Posterior vena cava (tissue), 2 donors: ENCODE measurements at regions of chr7 and their contacts with region 1.

Region 1: DNA sequence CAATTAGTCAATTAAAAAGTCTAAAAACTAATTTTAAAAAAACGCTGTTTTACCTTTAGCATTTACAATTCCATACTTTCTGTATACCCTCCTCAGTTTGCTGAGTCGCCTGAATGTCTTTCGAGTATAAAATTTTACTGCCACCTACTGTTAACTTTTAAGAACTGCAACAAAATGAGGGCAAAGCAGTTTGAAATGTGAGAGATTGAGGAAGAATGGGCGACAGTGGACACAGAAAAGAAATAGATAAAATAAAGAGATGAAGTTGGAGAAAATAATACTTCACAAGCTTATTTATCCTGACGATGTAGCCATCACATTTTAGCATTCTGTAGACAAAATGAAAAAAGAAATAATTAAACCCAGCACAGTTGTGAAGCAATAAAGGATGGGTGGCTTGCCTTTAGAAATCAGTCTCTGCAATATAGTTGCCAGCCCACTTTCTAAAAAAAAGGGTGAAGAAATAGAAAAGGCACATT is 110.8 kb upstream of the PTN start:
- DNase-seq: no peak

Region 2: GRCh38 chr7:137492889-137493288 is 38.6 kb after region 1 on chr7:
- intact Hi-C with region 1: loop called in 1 of 2 experiments (anchors 1 kb)
- DNase-seq: no peak